ENCODE measurements at regions of chr9 and their contacts with region 1.

Region 1: GRCh38 chr9:124771021-124771866 is at the start of gene NR6A1:
- DNase-seq: peak; percentile 98
- H3K4me3 ChIP-seq: peak within 1 kb of the TSS; percentile 75 to 92
- H3K27ac ChIP-seq: peak within 1 kb of the TSS; percentile 71 to 82
- H3K4me1 ChIP-seq: peaks cover 8 to 16% of the 10 kb centered on the region in 2 experiments; a peak in 3 of 4 replicates
- H3K27me3 ChIP-seq: no peaks in the 10 kb centered on the region
- CTCF ChIP-seq: peak; percentile 47
- EP300 ChIP-seq: peak in 1 of 2 experiments; percentile 73; a peak in 1 of 4 replicates
- RAD21 ChIP-seq: no peak
- polyA plus RNA-seq, gene NR6A1: 1.2 and 1.4 TPM in 2 replicates

Region 2: GRCh38 chr9:124503713-124504529 is 267.3 kb before region 1 on chr9:
- CTCF ChIA-PET with region 1: no interaction called
- POLR2A ChIA-PET with region 1: no interaction called
- DNase-seq: peak; percentile 62
- H3K4me3 ChIP-seq: no peak overlapping the region; a peak in 1 of 4 replicates
- H3K27ac ChIP-seq: no peak overlapping the region
- H3K4me1 ChIP-seq: no peaks in the 10 kb centered on the region; a peak in 1 of 4 replicates
- H3K27me3 ChIP-seq: peaks cover 51% of the 10 kb centered on the region
- CTCF ChIP-seq: no peak
- EP300 ChIP-seq: no peak
- RAD21 ChIP-seq: no peak

Region 3: GRCh38 chr9:124743686-124744348 is 27.4 kb before region 1 on chr9:
- CTCF ChIA-PET with region 1: interaction called, 20 read pairs
- POLR2A ChIA-PET with region 1: no interaction called
- DNase-seq: no peak
- H3K4me3 ChIP-seq: no peak overlapping the region
- H3K27ac ChIP-seq: peak overlapping the region; percentile 18 to 65; a peak in 3 of 4 replicates
- H3K4me1 ChIP-seq: peaks cover 8 to 36% of the 10 kb centered on the region in 2 experiments
- H3K27me3 ChIP-seq: no peaks in the 10 kb centered on the region
- CTCF ChIP-seq: no peak
- EP300 ChIP-seq: peak in 1 of 2 experiments; percentile 23; a peak in 1 of 4 replicates
- RAD21 ChIP-seq: no peak

Region 4: GRCh38 chr9:124782661-124783574 is 11.7 kb after region 1 on chr9:
- CTCF ChIA-PET with region 1: interaction called, 78 read pairs
- POLR2A ChIA-PET with region 1: no interaction called
- DNase-seq: no peak
- H3K4me3 ChIP-seq: no peak overlapping the region
- H3K27ac ChIP-seq: no peak overlapping the region
- H3K4me1 ChIP-seq: peaks cover 0 to 14% of the 10 kb centered on the region in 2 experiments; a peak in 2 of 4 replicates
- H3K27me3 ChIP-seq: no peaks in the 10 kb centered on the region
- CTCF ChIP-seq: no peak
- EP300 ChIP-seq: no peak
- RAD21 ChIP-seq: no peak

Region 5: DNA sequence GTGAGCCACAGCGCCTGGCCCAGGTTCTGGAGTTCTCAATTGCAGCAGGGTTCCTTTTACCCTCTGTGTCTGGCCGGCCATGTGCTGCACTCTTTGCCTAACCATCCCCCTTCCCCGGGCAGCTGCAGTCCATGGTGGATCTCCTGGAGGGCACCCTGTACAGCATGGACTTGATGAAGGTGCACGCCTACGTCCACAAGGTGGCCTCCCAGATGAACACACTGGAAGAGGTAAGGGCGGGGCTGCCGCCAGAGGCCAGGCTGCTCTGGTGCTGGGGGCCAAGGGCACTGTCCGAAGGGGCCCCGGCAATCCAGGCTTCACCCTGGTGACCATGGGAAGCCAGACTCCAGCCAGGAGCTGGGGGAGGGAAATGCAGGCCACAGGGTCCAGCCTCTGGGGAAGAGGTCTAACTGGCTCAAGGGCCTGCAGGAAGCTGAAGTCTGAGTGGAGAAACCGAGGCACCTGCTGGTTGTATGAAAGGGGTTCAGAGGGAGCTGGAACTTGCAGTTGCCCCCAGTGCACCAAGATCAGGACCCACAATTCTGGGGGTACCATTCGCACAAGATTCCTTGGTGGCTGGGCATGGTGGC is 23.8 kb after region 1 on chr9:
- CTCF ChIA-PET with region 1: interaction called, 81 read pairs
- POLR2A ChIA-PET with region 1: no interaction called
- DNase-seq: no peak
- H3K4me3 ChIP-seq: no peak overlapping the region
- H3K27ac ChIP-seq: no peak overlapping the region
- H3K4me1 ChIP-seq: peaks cover 4 to 15% of the 10 kb centered on the region in 2 experiments; a peak in 3 of 4 replicates
- H3K27me3 ChIP-seq: no peaks in the 10 kb centered on the region
- CTCF ChIP-seq: no peak
- EP300 ChIP-seq: no peak
- RAD21 ChIP-seq: no peak

Region 6: DNA sequence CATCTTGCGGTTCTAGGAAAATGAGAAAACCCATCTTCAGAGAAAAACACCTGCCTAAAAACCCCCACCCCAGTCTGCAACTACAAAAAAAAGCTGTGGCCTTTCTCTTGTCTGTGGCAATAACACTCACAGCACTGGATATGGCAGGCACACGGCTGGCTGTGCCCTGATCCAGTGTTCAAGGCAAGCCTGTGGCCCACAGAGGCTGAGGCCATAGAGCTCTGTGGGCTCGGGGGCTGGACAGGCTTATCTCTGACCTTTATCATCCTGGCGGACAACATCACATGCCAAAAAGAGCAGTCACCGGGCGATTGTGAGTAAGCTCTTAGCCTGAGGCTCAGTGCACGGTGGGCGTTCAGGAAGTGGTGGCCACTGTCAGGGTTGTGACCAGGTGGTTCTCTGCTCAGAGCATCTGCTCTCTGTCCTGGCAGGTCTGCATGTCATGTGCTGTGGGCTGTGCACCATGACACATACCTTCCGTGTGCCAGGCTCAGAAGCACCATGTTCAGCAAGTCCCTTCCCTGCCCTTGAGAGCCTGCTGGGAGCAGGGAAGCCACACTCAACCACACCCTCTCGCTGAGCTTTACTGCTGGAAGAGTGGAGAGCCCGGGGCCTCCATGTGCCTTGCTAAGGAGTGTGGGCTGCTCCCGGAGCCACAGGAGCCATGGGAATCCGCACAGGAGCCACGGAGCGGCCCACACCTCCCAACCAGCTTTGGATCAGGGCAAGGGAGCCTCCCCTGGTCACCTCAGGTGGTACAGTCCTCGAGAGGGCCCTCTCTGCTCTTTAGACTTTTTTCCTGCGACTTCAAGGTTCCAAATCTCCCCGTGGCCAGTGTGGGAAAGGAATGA is 47.4 kb after region 1 on chr9:
- CTCF ChIA-PET with region 1: interaction called, 21 read pairs
- POLR2A ChIA-PET with region 1: no interaction called
- DNase-seq: peak; percentile 71
- H3K4me3 ChIP-seq: no peak overlapping the region
- H3K27ac ChIP-seq: peak overlapping the region in 1 of 2 experiments; percentile 8; a peak in 2 of 4 replicates
- H3K4me1 ChIP-seq: peaks cover 0 to 8% of the 10 kb centered on the region in 2 experiments; a peak in 2 of 4 replicates
- H3K27me3 ChIP-seq: no peaks in the 10 kb centered on the region
- CTCF ChIP-seq: no peak
- EP300 ChIP-seq: peak; percentile 35 to 55; a peak in 3 of 4 replicates
- RAD21 ChIP-seq: no peak

Region 7: DNA sequence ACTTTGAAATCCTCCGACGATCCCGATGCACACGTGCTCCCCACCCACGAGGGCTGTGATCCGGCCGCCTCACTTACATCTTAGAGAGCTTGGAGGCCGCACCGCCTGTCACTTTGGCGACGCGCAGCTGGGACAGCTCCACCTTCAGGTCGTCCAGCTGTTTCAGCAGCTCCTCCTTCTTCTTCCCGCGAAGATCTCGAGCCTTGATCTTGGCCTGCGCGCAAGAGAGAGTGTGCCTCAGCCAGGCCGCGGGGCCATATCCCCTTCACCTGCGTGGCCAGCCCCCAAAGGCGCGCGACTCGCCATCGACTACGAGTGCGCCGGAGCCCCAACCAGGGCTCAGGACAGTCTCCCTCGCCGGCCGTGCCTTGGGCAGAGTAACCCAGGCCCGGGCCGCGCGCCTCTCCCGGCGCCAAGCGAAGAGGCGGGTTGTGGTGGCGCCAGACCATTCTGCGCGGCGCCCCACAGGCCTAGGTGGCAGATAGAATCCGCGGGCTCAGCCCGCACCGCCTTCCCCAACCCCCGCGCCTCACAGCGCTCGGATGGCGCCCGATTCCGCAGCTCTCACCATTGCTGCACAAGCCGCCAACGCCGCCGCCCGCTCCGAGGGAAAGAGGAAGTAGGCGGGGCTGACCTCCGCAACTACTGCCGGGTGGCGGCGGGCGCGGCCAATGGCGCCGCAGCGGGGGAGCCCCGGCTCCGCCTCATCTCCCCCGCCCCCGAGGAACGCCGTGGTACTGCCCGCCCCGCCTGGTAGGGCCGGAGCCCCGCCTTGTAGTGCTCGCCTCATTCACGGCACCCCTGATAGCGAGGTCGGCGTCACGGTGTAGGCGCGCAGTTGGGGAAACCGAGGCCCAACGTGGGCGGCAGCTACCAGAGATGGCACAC is 90.3 kb after region 1 on chr9 and contains the starts of genes ARPC5L and RPL35:
- CTCF ChIA-PET with region 1: interaction called, 1,436 read pairs
- POLR2A ChIA-PET with region 1: interaction called, 42 read pairs
- DNase-seq: peak; percentile 100
- H3K4me3 ChIP-seq: peak within 1 kb of the TSS; percentile 83 to 98
- H3K27ac ChIP-seq: peak within 1 kb of the TSS; percentile 79 to 90
- H3K4me1 ChIP-seq: peaks cover 13 to 27% of the 10 kb centered on the region in 2 experiments; a peak in 1 of 4 replicates
- H3K27me3 ChIP-seq: no peaks in the 10 kb centered on the region
- CTCF ChIP-seq: peak; percentile 34
- EP300 ChIP-seq: no peak
- RAD21 ChIP-seq: no peak
- polyA plus RNA-seq, gene ARPC5L: 69.6 and 73.1 TPM in 2 replicates
- polyA plus RNA-seq, gene RPL35: 5,012 and 5,348 TPM in 2 replicates

Measured in SK-N-SH (cell line).